ENCODE measurements at regions of chr16 and their contacts with region 1.

Region 1: GRCh38 chr16:48244080-48244862 is at the start of gene LONP2:
- DNase-seq: peak; percentile 82 to 90
- H3K4me3 ChIP-seq: peak within 1 kb of the TSS; percentile 74
- H3K27ac ChIP-seq: peak within 1 kb of the TSS; percentile 74
- H3K4me1 ChIP-seq: peaks cover 23% of the 10 kb centered on the region
- H3K27me3 ChIP-seq: no peaks in the 10 kb centered on the region
- CTCF ChIP-seq: no peak
- total RNA-seq, gene LONP2: 41.9 and 47.0 TPM in 2 replicates

Region 2: DNA sequence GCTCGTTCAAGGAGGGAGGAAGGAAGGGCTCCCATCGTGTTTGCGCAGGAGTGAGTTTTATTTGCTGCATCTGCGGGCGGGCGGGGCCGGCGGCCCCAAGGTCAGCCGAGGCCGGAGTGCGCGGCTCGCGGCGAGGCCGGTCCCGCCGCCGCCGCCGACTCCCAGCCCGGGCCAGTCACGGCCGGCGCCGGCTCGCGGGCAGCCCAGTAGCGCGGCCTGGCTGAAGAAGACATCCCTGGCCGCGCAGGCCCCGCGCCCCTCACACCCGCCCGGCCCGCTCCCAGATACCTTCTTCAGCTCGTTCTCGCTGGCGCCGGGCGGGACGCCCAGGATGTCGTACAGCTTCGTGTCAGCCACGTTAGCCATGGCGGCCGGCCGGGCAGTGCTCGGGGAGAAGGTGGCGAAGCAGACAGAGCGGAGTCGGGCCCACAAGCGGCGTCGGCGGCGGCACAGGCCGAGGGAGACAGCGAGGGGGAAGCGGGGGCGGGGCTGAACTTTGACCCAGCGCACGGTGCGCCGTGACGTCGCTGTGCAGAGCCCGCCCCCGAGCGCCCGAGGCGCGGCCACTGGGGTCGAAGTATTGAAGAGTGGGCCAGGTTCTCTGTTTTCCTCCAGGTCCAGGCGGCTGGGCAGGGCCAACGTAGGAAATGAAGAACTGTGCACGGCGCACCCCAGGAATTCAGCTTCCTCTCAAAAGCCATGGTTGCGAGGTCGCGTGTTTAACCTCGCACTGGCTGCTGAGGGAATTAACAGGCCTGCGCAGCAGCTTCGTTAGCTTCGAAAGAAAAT is 1270.9 kb before region 1 on chr16 and contains the start of gene DNAJA2:
- CTCF ChIA-PET with region 1: no interaction called
- POLR2A ChIA-PET with region 1: no interaction called
- intact Hi-C with region 1: loop called (anchors 10 kb)
- DNase-seq: peak; percentile 66 to 90
- H3K4me3 ChIP-seq: peak within 1 kb of the TSS; percentile 91
- H3K27ac ChIP-seq: peak within 1 kb of the TSS; percentile 85
- H3K4me1 ChIP-seq: peaks cover 41% of the 10 kb centered on the region
- H3K27me3 ChIP-seq: no peaks in the 10 kb centered on the region
- CTCF ChIP-seq: no peak
- total RNA-seq, gene DNAJA2: 78.9 and 89.8 TPM in 2 replicates

Region 3: DNA sequence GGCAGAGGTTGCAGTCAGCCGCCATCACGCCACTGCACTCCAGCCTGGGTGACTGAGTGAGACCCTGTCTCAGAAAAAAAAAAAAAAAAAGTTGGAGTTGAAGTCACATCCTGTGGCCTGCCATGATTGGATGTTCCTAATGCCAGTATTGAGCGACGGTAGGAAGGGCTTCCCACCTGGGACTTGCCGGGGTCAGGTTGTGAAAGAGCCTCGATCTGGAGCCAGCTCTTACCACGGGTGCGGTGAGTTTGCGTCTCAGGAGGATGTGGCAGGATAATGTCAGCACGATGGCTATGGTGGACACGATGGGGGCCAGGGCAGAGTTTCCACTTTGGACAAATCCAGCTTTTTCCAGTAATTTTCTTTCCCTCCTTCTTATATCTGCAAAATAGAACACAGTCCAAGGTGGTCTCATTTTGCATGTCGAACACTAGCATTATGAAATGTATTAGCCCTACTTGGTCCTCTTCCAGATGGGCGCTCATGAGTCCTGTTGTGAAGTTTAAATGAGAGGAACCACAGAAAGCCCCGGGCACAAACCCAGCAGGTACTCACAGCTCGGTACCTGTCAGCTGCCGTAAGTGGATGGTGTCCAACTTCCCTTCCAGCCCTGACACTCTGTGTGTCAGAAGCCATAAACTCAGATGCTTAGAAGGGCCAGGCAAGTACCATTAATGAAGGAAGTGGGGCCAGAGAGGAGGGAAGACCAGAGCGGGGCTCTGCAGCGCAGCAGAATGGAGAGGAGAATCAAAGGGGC is 110.6 kb before region 1 on chr16:
- CTCF ChIA-PET with region 1: interaction called, 16 read pairs
- POLR2A ChIA-PET with region 1: no interaction called
- intact Hi-C with region 1: no loop called
- DNase-seq: no peak
- H3K4me3 ChIP-seq: no peak overlapping the region
- H3K27ac ChIP-seq: no peak overlapping the region
- H3K4me1 ChIP-seq: peaks cover 18% of the 10 kb centered on the region
- H3K27me3 ChIP-seq: no peaks in the 10 kb centered on the region
- CTCF ChIP-seq: no peak

Region 4: GRCh38 chr16:48526058-48526957 is 282.0 kb after region 1 on chr16:
- CTCF ChIA-PET with region 1: no interaction called
- POLR2A ChIA-PET with region 1: no interaction called
- intact Hi-C with region 1: no loop called
- DNase-seq: peak; percentile 71 to 74
- H3K4me3 ChIP-seq: no peak overlapping the region
- H3K27ac ChIP-seq: no peak overlapping the region
- H3K4me1 ChIP-seq: peaks cover 22% of the 10 kb centered on the region
- H3K27me3 ChIP-seq: no peaks in the 10 kb centered on the region
- CTCF ChIP-seq: peak; percentile 77

Region 5: DNA sequence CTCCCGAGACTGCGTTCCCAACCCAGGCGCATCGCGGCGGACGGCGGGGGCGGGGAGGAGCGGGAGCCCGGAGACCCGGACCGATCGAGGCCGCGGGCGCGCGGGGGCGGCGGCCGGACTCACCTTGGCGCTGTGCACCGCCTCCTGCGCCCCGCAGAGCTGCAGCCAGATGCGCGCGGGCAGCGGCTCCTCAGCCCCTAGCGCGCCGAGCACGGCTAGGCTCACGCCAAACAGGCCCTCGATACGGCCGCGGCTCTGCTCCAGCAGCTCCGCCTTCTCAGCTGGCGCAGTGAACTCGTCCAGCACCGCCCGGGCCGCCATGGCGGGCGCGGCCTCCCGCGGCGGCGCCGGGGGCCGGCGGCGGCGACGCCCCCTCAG is 365.4 kb after region 1 on chr16:
- CTCF ChIA-PET with region 1: no interaction called
- POLR2A ChIA-PET with region 1: interaction called, 36 read pairs
- intact Hi-C with region 1: no loop called
- DNase-seq: no peak
- H3K4me3 ChIP-seq: peak overlapping the region; percentile 74
- H3K27ac ChIP-seq: peak overlapping the region; percentile 99
- H3K4me1 ChIP-seq: peaks cover 45% of the 10 kb centered on the region
- H3K27me3 ChIP-seq: no peaks in the 10 kb centered on the region
- CTCF ChIP-seq: no peak

Measured in PC-9 (cell line).